IMR-90 (cell line): ENCODE measurements at regions of chr2 and their contacts with region 1.

Region 1: DNA sequence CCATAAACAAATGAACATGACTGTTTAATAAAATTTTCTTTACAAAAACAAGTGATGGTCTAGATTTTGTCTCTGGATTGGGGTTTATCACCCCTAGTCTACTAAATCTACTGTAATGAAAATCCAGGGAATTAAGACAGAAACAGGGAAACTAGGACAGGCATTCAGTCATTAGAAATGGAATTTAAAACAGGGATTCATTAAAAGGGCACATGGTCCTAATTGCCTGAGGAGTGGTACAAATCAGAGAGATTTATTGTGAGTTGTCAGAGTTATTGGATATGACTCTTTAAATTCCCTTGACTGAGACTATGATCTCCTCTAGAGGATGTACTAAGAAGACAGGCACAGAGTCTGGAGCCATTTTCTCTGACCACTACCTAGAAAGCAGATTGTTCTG is 670.9 kb upstream of the GCFC2 start:
- DNase-seq: no peak
- ATAC-seq: no peak
- H3K4me3 ChIP-seq: no peak overlapping the region
- H3K27ac ChIP-seq: no peak overlapping the region
- H3K4me1 ChIP-seq: no peaks in the 10 kb centered on the region
- H3K27me3 ChIP-seq: no peaks in the 10 kb centered on the region
- CTCF ChIP-seq: no peak
- POLR2A ChIP-seq: no peak
- RAD21 ChIP-seq: no peak

Region 2: DNA sequence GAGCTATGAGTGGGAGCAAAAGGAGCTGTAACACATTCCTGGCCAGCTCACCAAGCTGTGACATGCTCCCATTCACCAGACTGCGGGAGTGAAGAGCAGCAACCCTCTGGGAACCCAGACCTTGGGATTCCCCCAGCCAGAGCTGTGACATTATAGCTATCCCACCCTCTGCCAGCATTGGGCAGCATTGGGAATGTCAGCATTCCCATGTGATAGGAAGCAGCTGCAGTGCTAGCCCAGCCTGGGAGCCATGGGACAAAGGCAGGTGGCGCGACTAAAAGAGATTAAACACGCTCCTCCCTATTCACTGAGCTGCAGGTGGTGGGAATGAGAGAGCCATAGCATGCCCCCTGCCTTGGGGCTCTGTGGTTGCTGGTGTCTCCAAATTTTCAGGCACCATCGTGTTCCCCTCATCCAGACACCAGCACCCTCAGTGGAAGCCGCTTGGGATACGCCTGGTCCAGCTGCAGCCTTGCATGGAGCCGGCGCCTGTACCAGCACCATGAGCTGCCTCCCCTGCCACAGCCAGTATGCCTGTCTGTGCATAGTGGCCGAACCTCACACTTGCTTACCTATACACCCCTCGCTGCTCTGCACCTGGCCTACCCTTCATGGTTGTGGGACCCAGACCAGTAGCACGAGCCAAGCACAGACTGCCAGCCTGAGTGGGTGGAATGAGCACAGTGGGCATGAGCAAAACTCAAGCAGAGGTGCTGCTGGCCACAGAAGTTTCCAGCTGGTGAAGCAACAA is 24.7 kb after region 1 on chr2:
- CTCF ChIA-PET with region 1: no interaction called
- POLR2A ChIA-PET with region 1: no interaction called
- dilution Hi-C with region 1: no loop called
- in situ Hi-C with region 1: no loop called
- intact Hi-C with region 1: loop called (anchors 2 kb)
- DNase-seq: no peak
- ATAC-seq: no peak
- H3K4me3 ChIP-seq: no peak overlapping the region
- H3K27ac ChIP-seq: no peak overlapping the region
- H3K4me1 ChIP-seq: no peaks in the 10 kb centered on the region
- H3K27me3 ChIP-seq: no peaks in the 10 kb centered on the region
- CTCF ChIP-seq: no peak
- POLR2A ChIP-seq: no peak
- RAD21 ChIP-seq: no peak

Region 3: GRCh38 chr2:76450024-76450475 is 68.4 kb after region 1 on chr2:
- CTCF ChIA-PET with region 1: no interaction called
- POLR2A ChIA-PET with region 1: no interaction called
- dilution Hi-C with region 1: no loop called
- in situ Hi-C with region 1: no loop called
- intact Hi-C with region 1: no loop called
- DNase-seq: no peak
- ATAC-seq: no peak
- H3K4me3 ChIP-seq: no peak overlapping the region
- H3K27ac ChIP-seq: no peak overlapping the region
- H3K4me1 ChIP-seq: no peaks in the 10 kb centered on the region
- H3K27me3 ChIP-seq: no peaks in the 10 kb centered on the region
- CTCF ChIP-seq: no peak
- POLR2A ChIP-seq: no peak
- RAD21 ChIP-seq: no peak